ENCODE measurements at regions of chr13 and their contacts with region 1.

Region 1: GRCh38 chr13:113288880-113289279 is 8.2 kb upstream of the LAMP1 start:
- DNase-seq: no peak
- H3K4me3 ChIP-seq: no peak overlapping the region
- H3K27ac ChIP-seq: no peak overlapping the region
- H3K4me1 ChIP-seq: peaks cover 0 to 5% (median 2%) of the 10 kb centered on the region in 4 experiments; a peak in 4 of 7 replicates
- H3K27me3 ChIP-seq: peaks cover 0 to 4% (median under 1%) of the 10 kb centered on the region in 4 experiments; a peak in 3 of 7 replicates
- CTCF ChIP-seq: no peak
- EP300 ChIP-seq: no peak
- POLR2A ChIP-seq: no peak
- RAD21 ChIP-seq: no peak

Region 2: GRCh38 chr13:113275387-113275786 is 13.5 kb before region 1 on chr13:
- CTCF ChIA-PET with region 1: interaction called, 11 read pairs
- POLR2A ChIA-PET with region 1: interaction called, 3 read pairs
- DNase-seq: peak in 1 of 2 experiments; percentile 59
- H3K4me3 ChIP-seq: no peak overlapping the region
- H3K27ac ChIP-seq: no peak overlapping the region
- H3K4me1 ChIP-seq: no peaks in the 10 kb centered on the region
- H3K27me3 ChIP-seq: no peaks in the 10 kb centered on the region
- CTCF ChIP-seq: peak; percentile 29 to 61 (median 57)
- EP300 ChIP-seq: no peak
- POLR2A ChIP-seq: no peak
- RAD21 ChIP-seq: peak; percentile 55 to 62

Region 3: GRCh38 chr13:113305208-113305607 is 16.3 kb after region 1 on chr13:
- CTCF ChIA-PET with region 1: no interaction called
- POLR2A ChIA-PET with region 1: no interaction called
- DNase-seq: no peak
- H3K4me3 ChIP-seq: no peak overlapping the region
- H3K27ac ChIP-seq: 0 out of 2 replicates have a peak overlapping the region, but pooled peaks have one; percentile 41
- H3K4me1 ChIP-seq: no peaks in the 10 kb centered on the region
- H3K27me3 ChIP-seq: no peaks in the 10 kb centered on the region
- CTCF ChIP-seq: no peak
- EP300 ChIP-seq: no peak
- POLR2A ChIP-seq: no peak
- RAD21 ChIP-seq: no peak

Measured in H1 (cell line).